Posterior vena cava (tissue), 2 donors: ENCODE measurements at regions of chr6 and their contacts with region 1.

Region 1: DNA sequence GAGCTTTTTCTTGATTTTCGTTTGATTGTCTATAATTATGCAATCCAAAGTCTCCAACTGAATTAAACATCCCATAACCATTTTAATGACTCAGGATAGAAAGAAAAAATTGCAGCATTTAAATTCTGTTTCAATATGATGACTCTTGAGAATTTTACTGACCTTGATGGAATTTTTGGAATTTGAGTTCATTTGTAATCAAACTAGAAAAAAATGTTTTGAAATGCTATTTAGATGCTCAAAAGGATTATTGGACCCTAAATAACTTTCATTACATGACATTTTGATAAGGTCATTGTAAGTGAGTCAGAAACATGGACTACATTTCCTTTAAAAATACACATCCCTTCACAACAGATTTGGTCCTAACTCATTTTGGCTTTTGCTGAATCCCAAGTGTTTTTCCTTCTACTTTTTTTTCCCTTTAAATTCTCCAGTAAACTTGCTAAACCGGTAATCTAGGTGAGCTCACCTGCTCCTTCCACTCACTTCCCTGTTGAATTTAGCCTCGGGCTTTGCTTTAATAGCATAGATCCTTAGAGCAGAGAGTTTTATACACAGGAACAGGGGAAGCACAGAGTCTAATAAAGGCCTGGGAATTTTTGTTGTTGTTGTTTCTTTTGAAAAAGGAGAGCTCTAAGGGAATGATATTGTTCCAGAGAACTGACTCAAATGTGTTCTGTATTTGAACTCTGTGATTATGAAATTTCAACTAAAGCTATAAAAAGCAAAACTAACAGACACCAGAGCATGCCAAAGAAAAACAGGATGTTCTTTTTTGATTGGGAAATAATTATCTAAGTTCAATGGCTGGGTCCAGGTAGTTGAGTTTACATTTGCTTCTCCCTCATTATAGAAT is 1088.2 kb upstream of the CITED2 start:
- DNase-seq: no peak

Region 2: GRCh38 chr6:140427849-140428248 is 34.8 kb before region 1 on chr6:
- intact Hi-C with region 1: no loop called
- DNase-seq: no peak

Region 3: GRCh38 chr6:140537819-140538705 is 75.4 kb after region 1 on chr6:
- intact Hi-C with region 1: loop called in 1 of 2 experiments (anchors 2 kb)
- DNase-seq: no peak